ENCODE measurements at regions of chr1 and their contacts with region 1.

Region 1: GRCh38 chr1:112619520-112620376 is at the start of gene CAPZA1:
- DNase-seq: peak; percentile 95
- ATAC-seq: peak; percentile 85
- H3K4me3 Mint-ChIP-seq: peak within 1 kb of the TSS; percentile 99
- H3K27ac Mint-ChIP-seq: peak within 1 kb of the TSS; percentile 100
- H3K4me1 Mint-ChIP-seq: peaks cover 34% of the 10 kb centered on the region
- H3K27me3 Mint-ChIP-seq: no peaks in the 10 kb centered on the region
- total RNA-seq, gene CAPZA1: 251 to 302 TPM

Region 2: DNA sequence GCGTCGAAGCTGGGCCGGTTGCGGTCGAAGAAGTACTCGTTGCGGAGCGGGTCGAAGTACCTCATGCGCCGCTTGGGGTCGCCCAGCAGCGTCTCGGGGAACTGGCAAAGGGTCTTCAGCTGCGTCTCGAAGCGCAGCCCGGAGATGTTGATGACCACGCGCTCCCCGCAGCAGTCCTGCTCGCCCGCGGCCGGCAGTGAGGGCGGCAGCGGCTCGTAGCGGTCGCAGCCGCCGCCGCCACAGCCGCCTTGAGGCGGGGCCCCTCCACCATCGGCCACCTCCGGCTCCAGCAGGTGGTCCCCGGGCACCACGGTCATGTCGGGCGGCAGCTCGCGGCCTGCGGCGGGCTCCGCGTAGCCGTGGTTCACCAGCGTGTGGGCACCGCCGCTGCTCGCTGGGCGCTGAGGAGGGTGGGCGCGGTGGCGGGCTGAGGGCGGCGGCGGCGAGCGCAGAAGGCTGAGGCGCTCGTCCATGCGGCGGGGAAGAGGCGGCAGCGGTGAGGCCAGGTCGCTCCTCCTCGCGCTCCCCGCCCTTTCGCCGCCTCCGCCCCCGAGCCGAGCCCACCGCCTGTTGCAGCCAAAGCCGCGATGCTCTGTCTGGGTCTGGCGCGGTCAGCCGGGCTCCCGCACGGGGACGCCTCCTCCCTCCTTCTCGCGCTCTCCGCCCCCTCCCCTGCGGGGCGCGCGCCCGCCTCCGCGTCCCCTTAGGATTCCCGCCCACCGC is 1945.2 kb before region 1 on chr1 and contains the start of gene KCNA3:
- CTCF ChIA-PET with region 1: no interaction called
- POLR2A ChIA-PET with region 1: no interaction called
- intact Hi-C with region 1: loop called in 1 of 2 experiments (anchors 5 kb)
- DNase-seq: peak; percentile 74
- ATAC-seq: peak; percentile 9
- H3K4me3 Mint-ChIP-seq: peak within 1 kb of the TSS; percentile 99
- H3K27ac Mint-ChIP-seq: peak within 1 kb of the TSS; percentile 99
- H3K4me1 Mint-ChIP-seq: peaks cover 34% of the 10 kb centered on the region
- H3K27me3 Mint-ChIP-seq: no peaks in the 10 kb centered on the region
- total RNA-seq, gene KCNA3: 20.0 to 20.5 TPM

Region 3: GRCh38 chr1:111222308-111223125 is 1397.2 kb before region 1 on chr1:
- CTCF ChIA-PET with region 1: no interaction called
- POLR2A ChIA-PET with region 1: no interaction called
- intact Hi-C with region 1: loop called in 1 of 2 experiments (anchors 5 kb)
- DNase-seq: peak; percentile 91
- ATAC-seq: peak; percentile 24
- H3K4me3 Mint-ChIP-seq: peak overlapping the region; percentile 62
- H3K27ac Mint-ChIP-seq: peak overlapping the region; percentile 88
- H3K4me1 Mint-ChIP-seq: peaks cover 93% of the 10 kb centered on the region
- H3K27me3 Mint-ChIP-seq: no peaks in the 10 kb centered on the region

Region 4: GRCh38 chr1:112395821-112396652 is 223.7 kb before region 1 on chr1 and contains the start of gene CTTNBP2NL:
- CTCF ChIA-PET with region 1: interaction called, 6 read pairs
- POLR2A ChIA-PET with region 1: interaction called, 3 read pairs
- intact Hi-C with region 1: loop called (anchors 1 to 2 kb)
- DNase-seq: peak; percentile 90
- ATAC-seq: peak; percentile 93
- H3K4me3 Mint-ChIP-seq: peak within 1 kb of the TSS; percentile 86
- H3K27ac Mint-ChIP-seq: peak within 1 kb of the TSS; percentile 69
- H3K4me1 Mint-ChIP-seq: peaks cover 28% of the 10 kb centered on the region
- H3K27me3 Mint-ChIP-seq: peaks cover 14% of the 10 kb centered on the region
- total RNA-seq, gene CTTNBP2NL: 2.9 to 3.3 TPM

Region 5: DNA sequence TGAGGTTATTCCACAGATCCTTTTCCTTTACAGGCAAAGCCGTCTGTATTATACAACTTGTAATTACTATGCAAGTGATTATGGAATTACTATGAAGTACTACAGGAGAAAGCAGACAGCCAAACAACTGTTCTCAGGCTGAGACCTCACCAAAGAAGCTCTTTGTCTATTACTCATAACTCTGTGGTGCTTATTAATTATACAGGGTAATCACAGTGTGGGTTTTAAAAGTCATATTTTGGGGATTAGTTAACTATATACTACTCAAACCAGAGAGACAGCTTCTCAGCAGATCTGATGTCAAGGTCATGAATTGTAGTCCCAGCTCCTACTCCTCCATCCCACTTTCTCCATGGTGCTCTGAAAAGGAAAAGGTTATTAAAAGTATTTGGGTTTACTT is 174.2 kb before region 1 on chr1:
- CTCF ChIA-PET with region 1: no interaction called
- POLR2A ChIA-PET with region 1: no interaction called
- intact Hi-C with region 1: no loop called
- DNase-seq: no peak
- ATAC-seq: no peak
- H3K4me3 Mint-ChIP-seq: no peak overlapping the region
- H3K27ac Mint-ChIP-seq: no peak overlapping the region
- H3K4me1 Mint-ChIP-seq: no peaks in the 10 kb centered on the region
- H3K27me3 Mint-ChIP-seq: peaks cover 2% of the 10 kb centered on the region

Region 6: DNA sequence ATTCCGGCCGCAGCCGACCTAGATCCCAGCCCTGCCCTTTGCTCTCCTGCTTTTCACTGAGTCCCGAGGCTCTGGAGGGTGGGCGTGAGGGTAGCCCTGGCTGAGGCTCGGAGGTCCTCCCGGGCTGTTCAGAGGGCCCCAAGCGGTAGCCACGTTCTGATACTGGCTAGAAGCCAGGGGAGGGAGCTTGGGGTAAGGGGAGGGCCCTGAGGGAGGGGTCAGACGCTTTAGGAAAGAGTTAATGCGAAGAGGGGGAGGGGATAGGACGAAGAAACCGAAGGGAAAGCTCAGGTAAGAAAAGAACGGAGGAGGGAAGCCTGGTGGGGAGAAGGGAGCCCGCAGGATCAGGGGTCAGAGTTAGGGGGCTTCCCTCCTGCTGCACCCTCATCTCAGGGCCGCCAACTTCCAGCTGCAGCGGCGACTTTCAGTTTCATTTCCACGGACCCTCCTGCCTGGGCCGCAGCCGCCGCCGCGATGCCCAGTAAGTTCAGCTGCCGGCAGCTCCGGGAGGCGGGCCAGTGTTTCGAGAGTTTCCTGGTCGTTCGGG is 54.8 kb after region 1 on chr1 and contains the start of gene MOV10:
- CTCF ChIA-PET with region 1: interaction called, 3 read pairs
- POLR2A ChIA-PET with region 1: interaction called, 5 read pairs
- intact Hi-C with region 1: loop called (anchors 1 kb)
- DNase-seq: peak; percentile 77
- ATAC-seq: peak; percentile 83
- H3K4me3 Mint-ChIP-seq: peak within 1 kb of the TSS; percentile 88
- H3K27ac Mint-ChIP-seq: peak within 1 kb of the TSS; percentile 92
- H3K4me1 Mint-ChIP-seq: peaks cover 43% of the 10 kb centered on the region
- H3K27me3 Mint-ChIP-seq: no peaks in the 10 kb centered on the region
- total RNA-seq, gene MOV10: 80.3 to 87.5 TPM

Region 7: DNA sequence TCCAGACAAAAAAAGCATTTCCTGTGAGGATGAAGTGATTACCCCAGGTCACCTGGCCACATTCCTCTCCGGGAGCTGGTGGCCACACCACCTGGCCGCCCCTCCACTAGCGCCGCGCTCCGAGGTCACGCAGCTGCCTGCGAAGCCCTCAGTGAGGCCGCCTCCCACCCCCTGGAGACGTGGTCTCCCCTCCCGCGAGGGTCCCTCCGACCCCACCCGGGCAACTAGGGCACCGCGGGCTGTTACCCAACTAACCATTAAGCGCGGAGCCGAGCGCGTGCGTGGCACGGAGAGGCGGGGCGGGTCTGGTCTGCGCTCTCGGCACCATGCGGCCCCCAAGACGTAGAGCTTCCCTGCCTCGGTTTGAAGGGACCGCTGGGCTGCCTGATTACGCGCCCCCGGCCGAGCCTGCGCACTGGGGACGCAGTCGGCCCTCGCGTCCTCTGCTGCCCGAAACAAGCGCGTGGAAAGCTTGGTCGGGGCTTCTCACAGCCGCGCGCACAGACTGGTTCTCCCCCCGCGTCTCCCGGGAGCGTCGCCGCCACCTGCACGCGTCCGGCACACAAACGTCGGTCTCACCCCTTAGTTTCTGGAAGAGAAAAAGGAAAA is 229.8 kb after region 1 on chr1:
- CTCF ChIA-PET with region 1: no interaction called
- POLR2A ChIA-PET with region 1: no interaction called
- intact Hi-C with region 1: no loop called
- DNase-seq: peak; percentile 20
- ATAC-seq: no peak
- H3K4me3 Mint-ChIP-seq: no peak overlapping the region
- H3K27ac Mint-ChIP-seq: no peak overlapping the region
- H3K4me1 Mint-ChIP-seq: no peaks in the 10 kb centered on the region
- H3K27me3 Mint-ChIP-seq: peaks cover 43% of the 10 kb centered on the region

Region 8: DNA sequence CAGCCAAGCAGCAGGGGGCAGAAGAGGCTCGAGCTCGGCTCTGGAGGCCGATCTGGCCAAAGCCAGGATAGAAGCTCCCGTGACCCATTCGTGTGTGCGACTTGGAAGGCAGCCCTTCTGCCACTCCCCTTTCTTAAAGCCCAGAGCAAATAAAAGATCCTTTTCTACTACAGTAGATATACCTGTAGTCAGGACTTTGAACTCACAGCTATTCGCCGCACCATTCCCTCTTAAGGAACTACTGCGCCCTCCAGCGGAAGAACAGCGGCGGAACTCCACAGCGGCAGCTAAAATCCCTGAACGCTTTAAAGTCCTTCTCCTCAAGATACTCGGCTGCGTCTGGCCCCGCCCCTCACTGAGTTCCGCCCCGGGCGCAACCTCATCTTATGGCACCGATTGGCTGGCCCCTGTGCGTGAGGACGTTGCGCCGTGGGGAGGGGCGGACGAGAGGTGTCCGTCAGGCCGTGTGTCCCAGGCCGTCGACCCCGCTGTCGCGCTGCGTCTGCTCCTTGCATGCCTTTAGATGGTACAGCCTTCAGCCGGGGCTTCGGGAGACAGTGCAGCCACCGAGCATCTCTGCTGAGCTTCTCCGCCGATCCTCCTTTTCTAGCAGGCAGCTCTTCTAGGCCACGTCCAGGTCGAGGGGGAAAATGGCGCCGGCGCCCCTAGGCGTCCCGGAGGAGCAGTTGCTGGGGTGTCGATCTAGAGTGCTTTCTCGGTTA is 453.2 kb after region 1 on chr1 and contains the start of gene LRIG2:
- CTCF ChIA-PET with region 1: no interaction called
- POLR2A ChIA-PET with region 1: interaction called, 7 read pairs
- intact Hi-C with region 1: loop called in 1 of 2 experiments (anchors 5 kb)
- DNase-seq: peak; percentile 99
- ATAC-seq: peak; percentile 98
- H3K4me3 Mint-ChIP-seq: peak within 1 kb of the TSS; percentile 98
- H3K27ac Mint-ChIP-seq: peak within 1 kb of the TSS; percentile 90
- H3K4me1 Mint-ChIP-seq: peaks cover 29% of the 10 kb centered on the region
- H3K27me3 Mint-ChIP-seq: no peaks in the 10 kb centered on the region
- total RNA-seq, gene LRIG2: 7.1 to 10.2 TPM